ENCODE measurements at regions of chr2 and their contacts with region 1.

Region 1: DNA sequence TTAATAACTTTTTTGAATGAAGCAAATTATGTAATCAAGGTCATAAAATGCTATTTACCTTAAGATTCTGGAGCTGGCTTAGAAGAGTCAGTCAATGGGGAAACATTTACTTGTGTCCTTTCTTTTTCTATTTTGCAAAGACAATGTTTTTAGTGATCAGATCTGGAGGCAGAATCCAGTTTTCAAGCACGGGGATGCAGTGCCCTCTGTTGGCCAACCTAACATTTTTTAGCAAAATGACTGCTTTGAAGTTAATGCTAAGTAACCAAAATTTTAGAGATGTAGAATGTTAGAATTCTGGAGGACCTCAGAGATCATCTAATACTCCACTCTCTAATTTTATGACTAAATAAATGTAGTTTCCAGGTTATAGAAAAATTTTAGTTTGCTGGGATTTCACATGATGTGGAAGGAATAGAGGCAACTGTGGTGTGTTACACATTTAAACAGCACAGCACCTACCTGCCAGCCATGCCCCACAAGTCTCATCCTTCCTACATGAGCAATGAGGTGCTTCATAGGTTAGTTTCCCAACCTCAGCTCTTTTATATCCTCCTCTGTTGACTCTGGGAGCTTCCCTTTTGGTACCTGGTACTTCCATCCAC is 23.6 kb upstream of the SLC9A4 start:
- DNase-seq: peak; percentile 65
- ATAC-seq: peak; percentile 55
- H3K4me3 ChIP-seq: no peak overlapping the region
- H3K27ac ChIP-seq: no peak overlapping the region
- H3K4me1 ChIP-seq: no peaks in the 10 kb centered on the region
- H3K27me3 ChIP-seq: 0 out of 2 replicates have a peak, but pooled peaks cover 1% of the 10 kb centered on the region
- CTCF ChIP-seq: peak; percentile 89

Region 2: GRCh38 chr2:101558740-101559519 is 890.5 kb before region 1 on chr2:
- CTCF ChIA-PET with region 1: no interaction called
- POLR2A ChIA-PET with region 1: no interaction called
- intact Hi-C with region 1: no loop called
- DNase-seq: peak; percentile 22
- ATAC-seq: peak; percentile 46
- H3K4me3 ChIP-seq: no peak overlapping the region
- H3K27ac ChIP-seq: peak overlapping the region; percentile 5
- H3K4me1 ChIP-seq: peaks cover 17% of the 10 kb centered on the region
- H3K27me3 ChIP-seq: no peaks in the 10 kb centered on the region
- CTCF ChIP-seq: no peak

Region 3: DNA sequence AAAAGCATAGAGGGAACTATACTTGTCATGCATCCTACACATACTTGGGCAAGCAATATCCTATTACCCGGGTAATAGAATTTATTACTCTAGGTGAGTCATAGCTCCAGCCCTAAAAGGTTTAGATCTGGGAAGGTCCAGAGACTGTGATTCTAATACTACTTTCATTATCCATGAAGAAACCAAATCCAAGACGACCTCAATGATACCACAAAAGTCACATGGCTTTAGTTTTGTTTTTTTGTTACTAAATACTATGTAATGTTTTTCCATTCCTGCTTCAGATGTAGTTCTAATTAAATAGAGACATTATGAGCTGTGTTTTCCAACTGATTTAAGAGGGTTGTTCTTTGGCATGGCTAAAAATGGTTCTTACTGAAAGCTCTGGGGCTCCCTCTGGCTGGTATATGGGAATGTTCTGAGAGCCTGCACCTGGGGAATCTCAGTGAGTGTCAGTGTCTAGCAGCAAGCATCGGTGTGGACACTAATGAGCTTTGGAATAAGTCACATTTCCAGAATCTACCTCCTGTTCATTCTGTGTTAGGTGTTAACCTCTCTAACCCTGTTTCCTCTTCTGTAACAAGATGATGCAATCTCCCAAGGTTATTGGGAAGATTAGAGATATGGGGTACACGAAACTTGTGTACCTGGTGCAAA is 283.2 kb before region 1 on chr2:
- CTCF ChIA-PET with region 1: interaction called, 9 read pairs
- POLR2A ChIA-PET with region 1: no interaction called
- intact Hi-C with region 1: loop called (anchors 5 kb)
- DNase-seq: peak; percentile 65
- ATAC-seq: peak; percentile 96
- H3K4me3 ChIP-seq: no peak overlapping the region
- H3K27ac ChIP-seq: 0 out of 2 replicates have a peak overlapping the region, but pooled peaks have one; percentile 6
- H3K4me1 ChIP-seq: peaks cover 15% of the 10 kb centered on the region
- H3K27me3 ChIP-seq: no peaks in the 10 kb centered on the region
- CTCF ChIP-seq: peak; percentile 79